HCT116 (cell line): ENCODE measurements at regions of chr12 and their contacts with region 1.

Region 1: DNA sequence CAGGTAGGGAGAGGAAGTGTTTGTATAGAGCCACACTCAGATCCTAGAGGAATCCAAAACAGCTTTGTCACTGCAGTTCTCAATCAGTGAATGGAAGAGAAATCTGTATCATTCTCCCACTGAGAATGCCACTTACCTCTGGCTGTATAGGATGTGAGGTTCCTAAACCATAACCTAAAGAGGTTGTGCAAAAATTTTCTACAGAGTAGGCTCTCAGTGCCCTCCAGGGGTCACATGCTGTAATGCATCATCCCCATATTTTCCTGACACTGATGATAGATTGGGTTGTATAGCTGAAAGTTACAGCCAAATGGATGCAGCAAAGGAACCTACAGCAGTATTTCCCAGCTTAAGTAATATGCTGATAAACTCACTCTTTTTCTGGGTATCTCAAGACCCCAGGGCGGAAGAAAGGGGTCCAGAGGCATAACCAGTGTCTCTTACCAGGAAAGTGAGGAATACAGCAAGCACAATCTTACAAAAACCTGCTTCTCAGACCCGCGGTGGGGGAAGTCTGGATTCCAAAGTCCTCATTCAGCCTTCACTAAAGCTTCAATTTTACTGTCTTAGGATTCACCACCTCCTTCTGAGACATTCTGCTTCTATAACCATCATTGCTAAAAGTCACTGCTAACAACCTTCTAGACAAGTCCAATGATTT is 3.8 kb downstream of the BCDIN3D start:
- DNase-seq: peak; percentile 22
- ATAC-seq: peak; percentile 30; the same call in 1 of the 2 replicates
- H3K4me3 ChIP-seq: no peak overlapping the region
- H3K27ac ChIP-seq: no peak overlapping the region
- H3K4me1 ChIP-seq: peaks cover 12 to 19% of the 10 kb centered on the region in 2 experiments; a peak in 3 of 4 replicates
- H3K27me3 ChIP-seq: no peaks in the 10 kb centered on the region
- CTCF ChIP-seq: peak; percentile 61 to 84 (median 66); a peak in 5 of 6 replicates
- POLR2A ChIP-seq: no peak
- RAD21 ChIP-seq: peak; percentile 85

Region 2: DNA sequence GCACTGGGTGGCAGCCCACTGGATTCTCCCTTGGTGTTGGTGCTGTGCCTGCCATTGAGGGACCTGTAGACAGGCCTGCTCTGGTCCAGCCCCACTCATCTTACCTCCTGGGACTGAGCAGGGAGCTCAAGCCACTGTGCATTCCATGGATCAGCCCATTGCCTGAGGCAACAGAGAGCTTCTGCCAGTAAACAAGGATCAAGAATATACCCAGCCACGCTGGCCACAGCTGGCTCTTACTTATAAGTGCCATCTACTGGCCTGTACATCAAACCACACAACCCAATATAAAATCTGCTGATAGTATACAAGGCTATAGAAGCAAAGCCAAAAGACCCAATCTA is 229.4 kb before region 1 on chr12:
- CTCF ChIA-PET with region 1: no interaction called
- POLR2A ChIA-PET with region 1: no interaction called
- RAD21 ChIA-PET with region 1: no interaction called
- intact Hi-C with region 1: no loop called
- DNase-seq: no peak
- ATAC-seq: peak; percentile 90
- H3K4me3 ChIP-seq: no peak overlapping the region
- H3K27ac ChIP-seq: no peak overlapping the region
- H3K4me1 ChIP-seq: no peaks in the 10 kb centered on the region
- H3K27me3 ChIP-seq: no peaks in the 10 kb centered on the region
- CTCF ChIP-seq: peak; percentile 19 to 24 (median 22); a peak in 1 of 6 replicates
- POLR2A ChIP-seq: no peak
- RAD21 ChIP-seq: no peak; the same call in 1 of the 2 replicates

Region 3: GRCh38 chr12:49828133-49829091 is 10.7 kb before region 1 on chr12 and contains the start of gene NCKAP5L:
- CTCF ChIA-PET with region 1: interaction called, 14 read pairs
- POLR2A ChIA-PET with region 1: interaction called, 9 read pairs
- RAD21 ChIA-PET with region 1: no interaction called
- intact Hi-C with region 1: no loop called
- DNase-seq: peak; percentile 82
- ATAC-seq: peak; percentile 94
- H3K4me3 ChIP-seq: peak within 1 kb of the TSS; percentile 68 to 74
- H3K27ac ChIP-seq: peak within 1 kb of the TSS; percentile 57
- H3K4me1 ChIP-seq: peaks cover 5 to 18% of the 10 kb centered on the region in 2 experiments; a peak in 3 of 4 replicates
- H3K27me3 ChIP-seq: no peaks in the 10 kb centered on the region
- CTCF ChIP-seq: no peak
- POLR2A ChIP-seq: no peak
- RAD21 ChIP-seq: no peak
- total RNA-seq, gene NCKAP5L: 12.1 TPM